Dendritic cell treated with granulocyte-macrophage colony-stimulating factor and Interleukin-4, amounts not matched to agents 40 ng/mL and 50 ng/mL, for 4 days (primary cell): ENCODE measurements at regions of chr4 and their contacts with region 1.

Region 1: DNA sequence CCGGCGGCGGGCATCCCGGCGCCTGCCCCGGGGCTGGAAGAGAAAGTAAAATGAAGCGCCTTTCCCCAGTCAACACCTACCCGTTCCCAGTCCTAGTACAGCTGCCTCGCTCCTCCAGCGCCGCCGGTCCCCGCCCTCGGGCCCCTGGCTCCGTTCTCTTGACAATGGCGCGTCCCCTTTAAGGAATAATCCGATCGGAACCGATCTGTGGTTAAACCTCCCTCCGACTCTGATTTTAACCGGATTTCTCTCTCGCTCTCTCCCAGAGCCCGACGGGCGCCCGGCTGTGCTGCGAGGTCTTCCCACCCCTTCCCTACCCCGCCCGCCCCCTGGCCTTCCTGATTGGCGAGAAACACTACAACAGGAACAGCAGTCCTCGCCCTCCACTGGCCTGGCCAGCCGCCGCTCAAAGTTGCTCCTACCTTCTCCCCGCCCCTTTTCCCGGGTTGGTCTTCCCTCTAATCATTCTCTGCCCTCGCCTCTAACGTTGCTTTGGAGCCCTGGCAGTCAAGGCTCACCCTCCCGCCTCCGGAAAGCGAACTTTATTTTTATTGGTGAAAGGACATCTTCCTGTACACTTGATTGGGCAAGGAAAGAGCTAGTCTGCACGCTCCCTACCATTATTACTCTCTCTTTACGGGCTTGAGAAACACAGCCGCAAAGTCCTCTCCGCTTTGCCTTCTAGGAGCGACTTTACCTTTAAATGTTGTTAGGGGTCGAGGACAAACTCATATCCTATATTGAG is at the start of gene FRYL:
- H3K4me3 Mint-ChIP-seq: peak within 1 kb of the TSS; percentile 98
- H3K27ac Mint-ChIP-seq: peak within 1 kb of the TSS; percentile 96
- H3K4me1 Mint-ChIP-seq: peaks cover 28% of the 10 kb centered on the region
- H3K27me3 Mint-ChIP-seq: no peaks in the 10 kb centered on the region

Region 2: GRCh38 chr4:48588230-48589097 is 191.7 kb before region 1 on chr4:
- intact Hi-C with region 1: loop called (anchors 10 kb)
- H3K4me3 Mint-ChIP-seq: no peak overlapping the region
- H3K27ac Mint-ChIP-seq: peak overlapping the region; percentile 17
- H3K4me1 Mint-ChIP-seq: peaks cover 17% of the 10 kb centered on the region
- H3K27me3 Mint-ChIP-seq: no peaks in the 10 kb centered on the region

Region 3: DNA sequence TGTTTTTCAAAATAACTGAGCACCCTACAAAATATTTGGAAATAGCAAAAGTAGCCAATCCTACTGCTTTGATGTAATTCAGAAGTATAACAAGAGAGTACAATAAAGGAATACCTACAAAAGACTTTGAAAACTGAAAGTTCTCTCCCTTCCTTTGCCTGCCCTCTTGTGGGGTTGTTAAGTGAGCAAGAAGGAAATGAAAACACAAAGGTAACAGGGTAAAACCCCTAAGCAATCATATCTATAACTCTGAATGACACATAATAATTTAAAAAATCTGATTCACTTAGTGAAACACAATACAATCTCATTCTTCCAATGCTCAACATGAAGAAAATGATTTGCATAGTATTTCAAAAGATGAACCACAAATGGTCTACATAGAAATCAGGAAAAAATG is 98.3 kb before region 1 on chr4:
- intact Hi-C with region 1: loop called (anchors 10 kb)
- H3K4me3 Mint-ChIP-seq: no peak overlapping the region
- H3K27ac Mint-ChIP-seq: no peak overlapping the region
- H3K4me1 Mint-ChIP-seq: peaks cover 21% of the 10 kb centered on the region
- H3K27me3 Mint-ChIP-seq: no peaks in the 10 kb centered on the region

Region 4: DNA sequence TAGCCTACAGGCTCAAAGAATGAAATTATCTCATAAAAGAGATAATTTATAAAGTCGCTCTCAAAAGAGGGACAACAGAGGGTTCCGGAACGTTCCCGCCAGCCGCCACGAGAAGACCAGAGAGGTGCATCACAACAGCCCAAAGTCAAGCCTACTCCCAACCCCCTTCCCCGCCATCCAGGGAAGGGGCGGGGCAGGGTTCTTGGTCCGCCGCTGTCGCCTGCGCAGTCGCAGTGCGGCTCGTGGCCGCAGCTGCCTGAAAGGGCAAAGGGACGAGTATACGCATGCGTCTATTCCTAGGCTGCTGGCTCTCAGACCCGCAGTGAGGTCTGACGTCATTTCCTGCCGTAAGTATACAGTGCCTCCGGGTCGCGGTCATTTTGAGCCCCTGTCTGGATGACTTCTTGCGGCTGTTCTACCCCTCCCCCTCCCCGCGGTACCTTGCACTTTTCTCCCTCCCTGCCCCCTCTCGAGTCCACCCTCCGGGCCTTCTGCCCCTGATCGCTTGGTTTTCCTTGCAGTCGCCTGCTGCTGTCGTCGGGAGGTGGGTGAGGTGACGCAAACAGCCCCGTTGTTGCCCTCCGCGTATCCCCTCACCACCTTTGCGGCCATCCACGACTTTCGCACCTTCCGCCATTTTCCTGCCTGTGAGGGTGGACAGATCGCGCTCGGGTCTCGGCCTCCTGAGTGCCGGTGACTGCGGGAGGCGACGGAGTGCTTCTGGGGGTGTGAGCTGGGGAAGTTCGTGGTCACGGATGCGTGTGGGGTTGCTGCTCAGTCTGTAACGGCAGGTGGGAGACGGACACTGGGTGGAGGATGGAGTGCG is 50.7 kb after region 1 on chr4 and contains the start of gene OCIAD1:
- intact Hi-C with region 1: loop called (anchors 1 kb)
- H3K4me3 Mint-ChIP-seq: peak within 1 kb of the TSS; percentile 97
- H3K27ac Mint-ChIP-seq: peak within 1 kb of the TSS; percentile 97
- H3K4me1 Mint-ChIP-seq: no peaks in the 10 kb centered on the region
- H3K27me3 Mint-ChIP-seq: peaks cover 6% of the 10 kb centered on the region